ENCODE measurements at regions of chr6 and their contacts with region 1.

Region 1: DNA sequence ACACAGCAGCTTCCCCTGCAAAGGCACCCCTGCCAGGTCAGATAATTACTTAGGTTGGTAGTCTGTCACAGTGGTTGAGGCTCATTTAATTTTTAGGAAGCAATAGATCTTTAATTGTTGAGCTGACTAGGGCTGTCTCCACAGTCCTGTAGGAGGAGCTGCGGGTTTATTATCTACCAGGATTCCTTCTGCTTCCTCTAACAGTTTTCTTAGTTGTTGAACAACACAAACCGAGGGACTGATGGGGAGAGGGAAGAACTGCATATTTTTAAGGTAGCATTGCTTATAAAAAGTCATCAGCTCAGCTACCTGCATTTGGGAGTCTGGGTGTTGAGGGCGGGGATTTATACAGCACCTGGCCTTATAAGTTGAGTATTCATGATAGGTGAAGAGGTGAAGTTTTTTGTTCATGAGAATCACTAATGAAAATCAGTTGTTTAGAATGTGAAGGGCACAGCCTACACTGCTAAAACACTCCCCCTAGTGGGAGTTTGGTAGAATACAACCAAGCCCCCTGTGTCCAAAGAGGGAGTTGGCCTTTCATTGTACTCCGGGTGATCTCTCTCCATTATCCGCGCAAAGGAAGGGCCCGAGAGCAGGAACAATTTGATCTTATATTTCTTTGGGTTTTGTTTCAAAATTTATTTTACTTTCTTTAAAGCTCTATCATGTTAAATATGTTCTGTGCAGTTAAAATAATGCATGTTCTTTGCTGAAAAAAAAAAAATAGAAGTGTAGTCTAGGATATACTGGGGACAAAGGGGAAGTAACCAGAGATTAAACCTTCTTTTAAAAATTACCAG is 69.6 kb downstream of the SSR1 start:
- DNase-seq: peak; percentile 56 to 76
- H3K4me3 ChIP-seq: no peak overlapping the region
- H3K4me3 Mint-ChIP-seq: no peak overlapping the region
- H3K27ac Mint-ChIP-seq: no peak overlapping the region
- H3K4me1 ChIP-seq: peaks cover 27% of the 10 kb centered on the region
- H3K4me1 Mint-ChIP-seq: peaks cover 39% of the 10 kb centered on the region
- H3K27me3 ChIP-seq: no peaks in the 10 kb centered on the region
- H3K27me3 Mint-ChIP-seq: no peaks in the 10 kb centered on the region
- CTCF ChIP-seq: peak; percentile 83 to 87

Region 2: GRCh38 chr6:6676910-6677441 is 566.4 kb before region 1 on chr6:
- CTCF ChIA-PET with region 1: no interaction called
- POLR2A ChIA-PET with region 1: no interaction called
- intact Hi-C with region 1: loop called (anchors 2 kb)
- DNase-seq: peak; percentile 65 to 83
- H3K4me3 ChIP-seq: no peak overlapping the region
- H3K4me3 Mint-ChIP-seq: no peak overlapping the region
- H3K27ac Mint-ChIP-seq: no peak overlapping the region
- H3K4me1 ChIP-seq: peaks cover 3% of the 10 kb centered on the region
- H3K4me1 Mint-ChIP-seq: peaks cover 7% of the 10 kb centered on the region
- H3K27me3 ChIP-seq: no peaks in the 10 kb centered on the region
- H3K27me3 Mint-ChIP-seq: peaks cover 4% of the 10 kb centered on the region
- CTCF ChIP-seq: peak; percentile 86 to 92

Region 3: DNA sequence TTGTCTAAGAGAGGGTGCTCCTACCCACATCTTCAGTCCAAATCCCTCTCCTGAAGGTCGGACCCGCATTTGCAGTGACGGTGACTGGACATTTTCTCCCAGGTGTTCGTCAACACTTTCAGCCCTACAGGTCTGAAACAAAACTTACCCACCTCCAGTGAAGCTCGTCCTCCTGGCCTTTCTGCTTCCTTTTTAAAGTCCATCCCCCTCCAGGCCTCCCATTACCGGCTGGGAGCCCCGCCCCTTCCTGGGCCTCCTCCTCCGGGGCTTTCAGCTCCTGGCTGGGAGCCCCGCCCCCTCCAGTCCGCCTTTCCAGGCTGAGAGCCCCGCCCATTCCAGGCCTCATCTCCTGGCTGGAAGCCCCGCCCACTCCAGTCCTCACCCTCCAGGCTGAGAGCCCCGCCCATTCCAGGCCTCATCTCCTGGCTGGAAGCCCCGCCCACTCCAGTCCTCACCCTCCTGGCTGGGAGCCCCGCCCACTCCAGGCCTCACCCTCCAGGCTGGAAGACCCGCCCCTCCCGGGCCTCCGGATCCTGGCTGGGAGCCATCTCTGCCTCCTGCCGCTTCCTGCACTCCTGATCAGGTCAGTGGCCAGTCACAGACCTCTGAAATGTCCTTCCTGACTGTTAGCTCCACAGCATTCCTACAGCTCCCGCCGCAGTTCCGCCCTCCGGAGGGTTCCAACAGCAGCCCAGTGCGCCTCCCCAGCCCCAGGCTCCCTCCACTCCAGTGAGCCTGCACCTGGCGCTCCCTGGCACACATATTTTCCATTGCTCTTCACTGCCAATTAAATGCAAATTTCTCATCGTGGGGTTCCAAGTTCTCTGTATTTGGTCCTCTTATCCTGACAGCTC is 556.4 kb before region 1 on chr6:
- CTCF ChIA-PET with region 1: no interaction called
- POLR2A ChIA-PET with region 1: no interaction called
- intact Hi-C with region 1: loop called (anchors 2 kb)
- DNase-seq: peak; percentile 92 to 96
- H3K4me3 ChIP-seq: peak overlapping the region; percentile 20
- H3K4me3 Mint-ChIP-seq: peak overlapping the region; percentile 65
- H3K27ac Mint-ChIP-seq: peak overlapping the region; percentile 71
- H3K4me1 ChIP-seq: peaks cover 24% of the 10 kb centered on the region
- H3K4me1 Mint-ChIP-seq: peaks cover 18% of the 10 kb centered on the region
- H3K27me3 ChIP-seq: no peaks in the 10 kb centered on the region
- H3K27me3 Mint-ChIP-seq: no peaks in the 10 kb centered on the region
- CTCF ChIP-seq: no peak

Region 4: DNA sequence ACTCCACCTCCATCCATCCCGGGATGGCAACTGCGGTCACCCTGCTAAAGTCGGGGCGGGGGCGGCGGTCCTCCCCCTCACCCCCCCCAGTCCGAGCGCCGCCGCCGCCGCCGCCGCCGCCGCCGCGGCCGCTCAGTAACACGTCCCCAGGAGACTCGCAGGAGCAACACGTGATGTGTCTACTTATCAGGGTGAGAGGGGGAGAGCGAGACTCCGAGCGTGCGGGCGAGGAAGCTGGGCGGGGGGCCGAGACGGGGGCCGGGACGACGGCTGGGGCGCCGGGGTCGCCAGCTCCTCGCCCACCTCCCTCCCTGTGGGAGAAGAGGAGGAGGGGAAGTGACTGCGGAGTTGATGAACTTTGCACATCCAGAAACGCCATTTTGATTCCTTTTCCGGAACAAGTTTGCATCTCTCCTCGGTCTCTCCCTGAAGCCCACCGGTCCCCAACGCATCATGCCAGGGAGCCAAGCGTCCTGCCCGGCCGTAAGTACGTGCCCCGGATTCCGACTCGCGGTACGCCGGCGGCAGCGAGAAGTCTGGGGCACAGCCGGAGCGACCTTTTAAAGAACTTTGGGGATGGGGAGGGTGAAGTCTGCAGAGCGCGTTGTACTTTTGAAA is 135.7 kb before region 1 on chr6 and contains the start of gene RREB1:
- CTCF ChIA-PET with region 1: no interaction called
- POLR2A ChIA-PET with region 1: no interaction called
- intact Hi-C with region 1: loop called (anchors 5 kb)
- DNase-seq: peak; percentile 65 to 73
- H3K4me3 ChIP-seq: peak within 1 kb of the TSS; percentile 63
- H3K4me3 Mint-ChIP-seq: peak within 1 kb of the TSS; percentile 68
- H3K27ac Mint-ChIP-seq: peak within 1 kb of the TSS; percentile 82
- H3K4me1 ChIP-seq: peaks cover 23% of the 10 kb centered on the region
- H3K4me1 Mint-ChIP-seq: peaks cover 11% of the 10 kb centered on the region
- H3K27me3 ChIP-seq: no peaks in the 10 kb centered on the region
- H3K27me3 Mint-ChIP-seq: no peaks in the 10 kb centered on the region
- CTCF ChIP-seq: no peak
- total RNA-seq, gene RREB1: 48.6 and 51.1 TPM in 2 replicates

Region 5: GRCh38 chr6:7145885-7146828 is 97.2 kb before region 1 on chr6:
- CTCF ChIA-PET with region 1: no interaction called
- POLR2A ChIA-PET with region 1: no interaction called
- intact Hi-C with region 1: loop called (anchors 2 kb)
- DNase-seq: peak; percentile 59 to 75
- H3K4me3 ChIP-seq: peak overlapping the region; percentile 28
- H3K4me3 Mint-ChIP-seq: peak overlapping the region; percentile 71
- H3K27ac Mint-ChIP-seq: peak overlapping the region; percentile 79
- H3K4me1 ChIP-seq: peaks cover 45% of the 10 kb centered on the region
- H3K4me1 Mint-ChIP-seq: peaks cover 52% of the 10 kb centered on the region
- H3K27me3 ChIP-seq: no peaks in the 10 kb centered on the region
- H3K27me3 Mint-ChIP-seq: no peaks in the 10 kb centered on the region
- CTCF ChIP-seq: no peak

Region 6: DNA sequence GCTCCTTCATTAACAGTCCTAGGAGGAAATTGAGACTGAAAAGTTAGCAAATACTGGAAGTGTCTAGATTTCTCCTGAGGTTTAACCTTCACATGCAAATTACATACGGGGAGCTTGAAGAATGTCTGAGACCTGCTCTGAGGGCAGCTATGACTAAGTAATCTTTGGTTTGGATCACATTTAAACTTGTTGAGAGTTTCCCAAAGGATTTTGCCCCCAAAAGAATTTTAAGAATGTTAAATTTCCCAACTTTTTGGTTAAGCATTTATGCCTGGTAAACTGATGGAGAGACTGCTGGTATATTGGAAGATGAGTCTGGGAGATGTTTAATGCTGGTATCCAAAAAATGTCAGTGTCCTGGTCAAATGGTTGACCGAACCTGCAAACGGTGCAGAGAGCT is 38.7 kb before region 1 on chr6:
- CTCF ChIA-PET with region 1: no interaction called
- POLR2A ChIA-PET with region 1: no interaction called
- intact Hi-C with region 1: no loop called
- DNase-seq: no peak
- H3K4me3 ChIP-seq: no peak overlapping the region
- H3K4me3 Mint-ChIP-seq: no peak overlapping the region
- H3K27ac Mint-ChIP-seq: peak overlapping the region; percentile 32
- H3K4me1 ChIP-seq: peaks cover 8% of the 10 kb centered on the region
- H3K4me1 Mint-ChIP-seq: peaks cover 20% of the 10 kb centered on the region
- H3K27me3 ChIP-seq: no peaks in the 10 kb centered on the region
- H3K27me3 Mint-ChIP-seq: no peaks in the 10 kb centered on the region
- CTCF ChIP-seq: no peak

Region 7: DNA sequence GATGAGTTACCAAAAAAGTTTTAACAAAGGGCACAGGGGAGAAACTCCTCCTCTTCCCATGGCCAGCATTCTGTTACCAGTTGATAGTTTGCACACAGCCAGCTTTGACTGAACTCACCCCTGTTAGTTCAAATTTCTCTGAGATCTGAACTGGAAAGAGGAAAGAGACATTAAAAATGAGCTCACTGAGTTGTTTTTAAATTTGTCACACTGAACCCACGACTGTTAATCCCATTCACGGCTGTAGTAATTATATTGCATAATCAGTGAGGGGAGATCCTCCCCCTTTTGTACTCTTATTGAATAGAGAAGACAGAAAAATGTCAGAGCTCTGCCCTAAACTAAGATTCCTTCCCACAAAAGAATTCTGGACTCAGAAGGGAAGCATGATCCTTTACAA is 280.5 kb after region 1 on chr6:
- CTCF ChIA-PET with region 1: no interaction called
- POLR2A ChIA-PET with region 1: no interaction called
- intact Hi-C with region 1: no loop called
- DNase-seq: no peak
- H3K4me3 ChIP-seq: no peak overlapping the region
- H3K4me3 Mint-ChIP-seq: no peak overlapping the region
- H3K27ac Mint-ChIP-seq: no peak overlapping the region
- H3K4me1 ChIP-seq: no peaks in the 10 kb centered on the region
- H3K4me1 Mint-ChIP-seq: no peaks in the 10 kb centered on the region
- H3K27me3 ChIP-seq: no peaks in the 10 kb centered on the region
- H3K27me3 Mint-ChIP-seq: no peaks in the 10 kb centered on the region
- CTCF ChIP-seq: no peak